ENCODE measurements at regions of chr2 and their contacts with region 1.

Region 1: GRCh38 chr2:162013514-162014475 is 60.2 kb downstream of the DPP4 start:
- DNase-seq: peak in 3 of 9 experiments; percentile 25 to 60 (median 31)
- ATAC-seq: peak; percentile 32
- H3K4me3 ChIP-seq: no peak overlapping the region
- H3K4me3 Mint-ChIP-seq: peak overlapping the region; percentile 46
- H3K27ac ChIP-seq: peak overlapping the region; percentile 60 to 83
- H3K27ac Mint-ChIP-seq: peak overlapping the region; percentile 95
- H3K4me1 ChIP-seq: peaks cover 60% of the 10 kb centered on the region
- H3K4me1 Mint-ChIP-seq: peaks cover 74% of the 10 kb centered on the region
- H3K27me3 ChIP-seq: no peaks in the 10 kb centered on the region
- H3K27me3 Mint-ChIP-seq: no peaks in the 10 kb centered on the region
- CTCF ChIP-seq: no peak

Region 2: GRCh38 chr2:161938339-161938738 is 75.5 kb before region 1 on chr2:
- CTCF ChIA-PET with region 1: no interaction called
- POLR2A ChIA-PET with region 1: no interaction called
- intact Hi-C with region 1: no loop called
- DNase-seq: no peak
- ATAC-seq: no peak
- H3K4me3 ChIP-seq: no peak overlapping the region
- H3K4me3 Mint-ChIP-seq: no peak overlapping the region
- H3K27ac ChIP-seq: no peak overlapping the region
- H3K27ac Mint-ChIP-seq: no peak overlapping the region
- H3K4me1 ChIP-seq: no peaks in the 10 kb centered on the region
- H3K4me1 Mint-ChIP-seq: peaks cover 2% of the 10 kb centered on the region
- H3K27me3 ChIP-seq: no peaks in the 10 kb centered on the region
- H3K27me3 Mint-ChIP-seq: peaks cover 5% of the 10 kb centered on the region
- CTCF ChIP-seq: no peak

Region 3: GRCh38 chr2:161954103-161954502 is 59.7 kb before region 1 on chr2:
- CTCF ChIA-PET with region 1: interaction called, 3 read pairs
- POLR2A ChIA-PET with region 1: interaction called, 4 read pairs
- intact Hi-C with region 1: loop called in 1 of 2 experiments (anchors 2 kb)
- DNase-seq: peak in 3 of 9 experiments; percentile 21 to 74 (median 61)
- ATAC-seq: peak; percentile 60
- H3K4me3 ChIP-seq: no peak overlapping the region
- H3K4me3 Mint-ChIP-seq: peak overlapping the region; percentile 16
- H3K27ac ChIP-seq: no peak overlapping the region
- H3K27ac Mint-ChIP-seq: peak overlapping the region; percentile 5
- H3K4me1 ChIP-seq: peaks cover 52% of the 10 kb centered on the region
- H3K4me1 Mint-ChIP-seq: peaks cover 54% of the 10 kb centered on the region
- H3K27me3 ChIP-seq: no peaks in the 10 kb centered on the region
- H3K27me3 Mint-ChIP-seq: no peaks in the 10 kb centered on the region
- CTCF ChIP-seq: no peak

Region 4: DNA sequence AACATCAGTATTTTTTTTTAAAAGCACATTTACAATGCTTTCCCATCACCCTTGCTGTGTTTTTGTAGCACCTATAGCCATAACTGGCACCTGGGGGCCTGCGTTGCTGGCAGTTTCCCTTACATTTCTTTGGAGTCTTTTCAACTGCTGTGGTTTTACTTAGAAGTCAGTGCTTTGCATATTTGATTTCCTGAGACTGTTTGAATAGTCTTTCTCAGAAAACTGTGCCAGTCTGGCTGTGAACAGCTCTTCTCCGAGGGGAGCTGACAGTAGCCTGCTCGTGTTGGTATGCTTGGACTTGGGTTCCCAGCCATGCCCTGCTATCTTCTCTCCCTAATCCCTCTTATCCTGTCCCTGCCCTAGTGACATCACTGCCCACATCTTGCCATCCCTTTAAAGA is 21.3 kb before region 1 on chr2:
- CTCF ChIA-PET with region 1: interaction called, 3 read pairs
- POLR2A ChIA-PET with region 1: interaction called, 4 read pairs
- intact Hi-C with region 1: loop called in 1 of 2 experiments (anchors 1 kb)
- DNase-seq: peak; percentile 12 to 69 (median 48)
- ATAC-seq: peak; percentile 76
- H3K4me3 ChIP-seq: peak overlapping the region; percentile 7 to 34
- H3K4me3 Mint-ChIP-seq: peak overlapping the region; percentile 87
- H3K27ac ChIP-seq: peak overlapping the region; percentile 44 to 70
- H3K27ac Mint-ChIP-seq: peak overlapping the region; percentile 98
- H3K4me1 ChIP-seq: peaks cover 49% of the 10 kb centered on the region
- H3K4me1 Mint-ChIP-seq: peaks cover 56% of the 10 kb centered on the region
- H3K27me3 ChIP-seq: no peaks in the 10 kb centered on the region
- H3K27me3 Mint-ChIP-seq: no peaks in the 10 kb centered on the region
- CTCF ChIP-seq: no peak

Region 5: DNA sequence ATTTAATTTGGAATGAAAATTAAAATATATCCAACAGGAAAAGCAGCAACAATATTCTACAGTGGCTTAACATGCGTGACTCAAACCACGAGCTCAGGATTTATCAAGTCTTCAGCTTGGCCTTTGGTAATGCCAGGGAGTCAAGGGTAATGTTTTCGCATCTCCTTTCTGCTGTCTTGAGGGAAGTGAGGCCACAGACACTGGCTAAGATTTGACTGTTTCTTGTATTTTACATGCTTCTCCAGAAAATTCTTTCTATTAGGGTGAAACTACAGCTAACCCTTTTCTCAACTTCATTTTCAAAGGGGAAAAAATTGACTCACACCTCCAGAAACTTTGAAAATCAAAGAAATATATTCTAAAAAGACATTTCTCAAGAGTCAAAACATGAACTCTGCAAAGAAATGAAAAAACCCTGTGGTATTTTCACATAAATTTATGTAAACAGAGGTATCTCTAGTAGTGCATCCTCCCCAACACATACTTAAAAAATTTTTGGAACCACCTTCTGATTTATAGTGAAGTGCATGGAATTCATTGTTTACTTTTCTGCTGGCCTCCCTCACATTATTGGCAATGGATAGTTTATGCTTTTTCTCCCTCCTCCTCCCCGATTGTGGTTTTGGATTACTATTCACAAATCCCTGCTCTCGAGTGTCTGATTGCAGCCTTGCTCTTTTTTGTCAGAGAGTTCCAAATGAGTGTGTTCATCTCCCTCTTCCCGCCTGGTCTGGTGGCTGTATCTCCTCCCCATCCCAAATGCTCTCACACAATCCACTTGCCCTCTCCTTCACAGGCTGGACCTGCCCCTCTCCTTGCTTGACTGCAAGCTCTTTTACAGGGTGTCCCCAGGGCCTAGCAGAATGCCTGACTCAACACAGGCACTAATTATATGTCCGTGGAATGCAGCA is 11.6 kb after region 1 on chr2:
- CTCF ChIA-PET with region 1: interaction called, 19 read pairs
- POLR2A ChIA-PET with region 1: interaction called, 21 read pairs
- intact Hi-C with region 1: no loop called
- DNase-seq: no peak
- ATAC-seq: no peak
- H3K4me3 ChIP-seq: no peak overlapping the region
- H3K4me3 Mint-ChIP-seq: no peak overlapping the region
- H3K27ac ChIP-seq: no peak overlapping the region
- H3K27ac Mint-ChIP-seq: peak overlapping the region; percentile 9
- H3K4me1 ChIP-seq: peaks cover 12% of the 10 kb centered on the region
- H3K4me1 Mint-ChIP-seq: peaks cover 56% of the 10 kb centered on the region
- H3K27me3 ChIP-seq: no peaks in the 10 kb centered on the region
- H3K27me3 Mint-ChIP-seq: no peaks in the 10 kb centered on the region
- CTCF ChIP-seq: no peak

Region 6: GRCh38 chr2:162058973-162059668 is 45.3 kb after region 1 on chr2:
- CTCF ChIA-PET with region 1: no interaction called
- POLR2A ChIA-PET with region 1: interaction called, 4 read pairs
- intact Hi-C with region 1: loop called in 1 of 2 experiments (anchors 2 kb)
- DNase-seq: peak in 1 of 9 experiments; percentile 24
- ATAC-seq: peak; percentile 49
- H3K4me3 ChIP-seq: no peak overlapping the region
- H3K4me3 Mint-ChIP-seq: peak overlapping the region; percentile 64
- H3K27ac ChIP-seq: no peak overlapping the region
- H3K27ac Mint-ChIP-seq: peak overlapping the region; percentile 68
- H3K4me1 ChIP-seq: peaks cover 50% of the 10 kb centered on the region
- H3K4me1 Mint-ChIP-seq: peaks cover 77% of the 10 kb centered on the region
- H3K27me3 ChIP-seq: no peaks in the 10 kb centered on the region
- H3K27me3 Mint-ChIP-seq: no peaks in the 10 kb centered on the region
- CTCF ChIP-seq: no peak

Region 7: DNA sequence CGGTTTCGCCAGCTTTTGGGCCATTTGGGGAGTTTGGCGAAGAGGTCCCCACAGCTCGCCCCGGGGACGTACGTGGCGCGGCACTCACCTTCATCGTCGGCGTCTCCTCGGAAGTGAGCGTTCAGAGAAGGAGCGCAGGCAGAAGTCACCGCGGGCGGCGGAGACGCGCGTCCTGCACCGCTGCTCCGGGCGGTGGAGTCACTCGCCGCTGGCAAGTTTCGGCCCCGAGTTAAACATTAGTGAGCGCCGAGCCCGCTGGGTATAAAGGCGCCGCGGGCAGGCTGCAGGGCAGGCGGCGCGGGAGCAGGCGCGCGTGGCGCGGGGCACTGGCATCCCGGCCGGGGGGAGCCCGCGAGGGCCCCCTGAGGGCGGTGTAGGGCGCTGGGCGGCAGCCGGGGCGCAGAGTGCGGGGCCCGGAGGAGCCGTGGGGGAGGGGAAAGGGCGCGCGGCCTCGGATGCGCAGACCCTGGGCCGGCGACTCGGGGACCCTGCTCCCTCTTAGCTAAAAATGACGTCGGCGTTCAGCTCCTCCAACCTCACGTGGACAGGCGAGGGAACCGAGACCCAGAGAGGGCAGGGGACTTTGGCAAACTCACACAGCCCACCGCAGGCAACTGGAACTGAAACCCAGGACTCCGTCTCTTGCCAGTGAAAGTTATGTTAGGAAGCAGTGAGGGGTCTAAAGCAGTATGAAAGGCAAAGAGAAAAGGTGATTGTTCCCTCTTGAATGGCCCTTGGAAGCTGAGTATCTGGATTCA is 60.3 kb after region 1 on chr2 and contains the start of gene DPP4:
- CTCF ChIA-PET with region 1: interaction called, 6 read pairs
- POLR2A ChIA-PET with region 1: interaction called, 14 read pairs
- intact Hi-C with region 1: loop called in 1 of 2 experiments (anchors 1 kb)
- DNase-seq: peak; percentile 19 to 77 (median 49)
- ATAC-seq: peak; percentile 80
- H3K4me3 ChIP-seq: peak within 1 kb of the TSS; percentile 79 to 83
- H3K4me3 Mint-ChIP-seq: peak within 1 kb of the TSS; percentile 96
- H3K27ac ChIP-seq: peak within 1 kb of the TSS; percentile 31 to 67
- H3K27ac Mint-ChIP-seq: peak within 1 kb of the TSS; percentile 93
- H3K4me1 ChIP-seq: peaks cover 26% of the 10 kb centered on the region
- H3K4me1 Mint-ChIP-seq: peaks cover 49% of the 10 kb centered on the region
- H3K27me3 ChIP-seq: no peaks in the 10 kb centered on the region
- H3K27me3 Mint-ChIP-seq: no peaks in the 10 kb centered on the region
- CTCF ChIP-seq: no peak
- total RNA-seq, gene DPP4: 13.5 to 15.4 TPM

Region 8: DNA sequence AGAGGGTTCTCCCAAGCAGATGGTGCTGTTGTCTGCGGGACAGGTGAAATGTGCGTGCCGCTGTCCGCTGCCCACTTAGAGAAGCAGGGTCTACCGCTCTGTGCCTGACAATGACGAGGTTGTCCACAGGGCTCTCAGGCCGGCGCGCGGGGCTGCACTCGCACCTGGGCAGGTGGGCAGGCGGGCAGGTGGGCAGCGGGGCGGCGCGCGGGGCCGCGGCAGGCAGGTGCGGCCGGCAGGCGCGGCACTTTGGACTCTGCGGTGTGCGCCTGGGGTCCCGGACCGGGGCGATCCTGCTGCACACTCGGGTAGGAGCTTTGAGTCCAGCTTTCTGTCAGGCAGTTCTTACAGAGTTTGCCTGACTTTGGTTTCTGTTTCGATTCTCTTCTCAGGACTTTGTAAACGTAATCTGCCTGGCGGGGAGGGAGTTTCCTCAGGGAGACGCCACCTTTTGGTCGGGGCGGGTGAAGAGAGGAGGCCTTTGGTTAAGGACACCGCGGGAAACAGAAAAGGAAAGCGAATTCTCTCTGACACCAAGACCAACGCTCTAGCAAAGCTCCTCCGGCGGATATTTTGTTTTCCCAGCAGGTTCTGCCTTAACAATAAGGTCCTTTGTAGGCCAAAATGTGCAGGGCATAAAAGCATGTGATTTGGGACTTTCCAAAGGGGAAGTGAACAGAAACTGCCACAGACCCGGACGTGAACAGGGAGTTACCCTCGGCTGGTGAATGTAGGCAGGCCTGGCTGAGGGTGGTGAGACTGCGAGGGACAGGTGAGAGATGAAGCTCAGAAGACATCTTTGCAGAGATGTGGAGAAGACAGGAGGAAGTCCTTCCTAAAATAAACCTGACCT is 304.8 kb after region 1 on chr2 and contains the start of gene IFIH1:
- CTCF ChIA-PET with region 1: no interaction called
- POLR2A ChIA-PET with region 1: no interaction called
- intact Hi-C with region 1: loop called in 1 of 2 experiments (anchors 5 kb)
- DNase-seq: peak; percentile 40 to 94 (median 68)
- ATAC-seq: peak; percentile 82
- H3K4me3 ChIP-seq: peak within 1 kb of the TSS; percentile 64 to 76
- H3K4me3 Mint-ChIP-seq: peak within 1 kb of the TSS; percentile 97
- H3K27ac ChIP-seq: peak within 1 kb of the TSS; percentile 92 to 95
- H3K27ac Mint-ChIP-seq: peak within 1 kb of the TSS; percentile 99
- H3K4me1 ChIP-seq: peaks cover 45% of the 10 kb centered on the region
- H3K4me1 Mint-ChIP-seq: peaks cover 65% of the 10 kb centered on the region
- H3K27me3 ChIP-seq: no peaks in the 10 kb centered on the region
- H3K27me3 Mint-ChIP-seq: no peaks in the 10 kb centered on the region
- CTCF ChIP-seq: no peak
- total RNA-seq, gene IFIH1: 30.8 to 32.5 TPM

Region 9: GRCh38 chr2:163198972-163199371 is 1185.2 kb after region 1 on chr2:
- CTCF ChIA-PET with region 1: no interaction called
- POLR2A ChIA-PET with region 1: no interaction called
- intact Hi-C with region 1: no loop called
- DNase-seq: no peak
- ATAC-seq: no peak
- H3K4me3 ChIP-seq: no peak overlapping the region
- H3K4me3 Mint-ChIP-seq: no peak overlapping the region
- H3K27ac ChIP-seq: no peak overlapping the region
- H3K27ac Mint-ChIP-seq: no peak overlapping the region
- H3K4me1 ChIP-seq: no peaks in the 10 kb centered on the region
- H3K4me1 Mint-ChIP-seq: no peaks in the 10 kb centered on the region
- H3K27me3 ChIP-seq: no peaks in the 10 kb centered on the region
- H3K27me3 Mint-ChIP-seq: no peaks in the 10 kb centered on the region
- CTCF ChIP-seq: no peak